Naive thymus-derived CD8-positive, alpha-beta T cell (primary cell): ENCODE measurements at regions of chrX and their contacts with region 1.

Region 1: GRCh38 chrX:79153348-79153747 is 8.9 kb downstream of the GPR174 start:
- DNase-seq: no peak
- ATAC-seq: peak; percentile 11 to 19
- H3K4me3 Mint-ChIP-seq: peak overlapping the region; percentile 62 to 92 (median 82)
- H3K27ac Mint-ChIP-seq: peak overlapping the region; percentile 93 to 99 (median 94)
- H3K4me1 Mint-ChIP-seq: peaks cover 16 to 86% (median 60%) of the 10 kb centered on the region in 4 donors
- H3K27me3 Mint-ChIP-seq: no peaks in the 10 kb centered on the region

Region 2: DNA sequence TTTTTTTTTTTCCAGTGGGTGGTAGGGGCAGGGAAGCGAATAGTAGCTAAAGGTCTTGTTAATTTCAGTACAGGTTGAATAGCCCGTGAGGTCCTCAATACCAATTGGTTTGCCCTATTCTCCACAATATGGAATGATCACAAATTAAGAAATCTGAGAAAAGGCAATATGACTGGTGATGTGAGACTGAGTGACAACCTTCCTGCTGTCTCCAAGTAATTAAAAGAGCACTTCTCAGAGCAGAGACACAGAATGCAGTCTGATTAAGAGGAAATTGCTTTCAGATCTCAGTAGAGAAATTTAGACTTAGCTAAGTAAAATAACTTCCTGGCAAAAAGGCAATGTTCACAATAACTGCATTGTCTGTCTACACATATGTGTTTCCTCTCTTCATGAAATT is 14.1 kb after region 1 on chrX:
- POLR2A ChIA-PET with region 1: interaction called, 19 read pairs
- DNase-seq: no peak
- ATAC-seq: peak; percentile 38 to 50
- H3K4me3 Mint-ChIP-seq: peak overlapping the region; percentile 7 to 82 (median 71)
- H3K27ac Mint-ChIP-seq: peak overlapping the region; percentile 83 to 98 (median 94)
- H3K4me1 Mint-ChIP-seq: peaks cover 20 to 94% (median 64%) of the 10 kb centered on the region in 4 donors
- H3K27me3 Mint-ChIP-seq: no peaks in the 10 kb centered on the region